ENCODE measurements at regions of chr15 and their contacts with region 1.

Region 1: DNA sequence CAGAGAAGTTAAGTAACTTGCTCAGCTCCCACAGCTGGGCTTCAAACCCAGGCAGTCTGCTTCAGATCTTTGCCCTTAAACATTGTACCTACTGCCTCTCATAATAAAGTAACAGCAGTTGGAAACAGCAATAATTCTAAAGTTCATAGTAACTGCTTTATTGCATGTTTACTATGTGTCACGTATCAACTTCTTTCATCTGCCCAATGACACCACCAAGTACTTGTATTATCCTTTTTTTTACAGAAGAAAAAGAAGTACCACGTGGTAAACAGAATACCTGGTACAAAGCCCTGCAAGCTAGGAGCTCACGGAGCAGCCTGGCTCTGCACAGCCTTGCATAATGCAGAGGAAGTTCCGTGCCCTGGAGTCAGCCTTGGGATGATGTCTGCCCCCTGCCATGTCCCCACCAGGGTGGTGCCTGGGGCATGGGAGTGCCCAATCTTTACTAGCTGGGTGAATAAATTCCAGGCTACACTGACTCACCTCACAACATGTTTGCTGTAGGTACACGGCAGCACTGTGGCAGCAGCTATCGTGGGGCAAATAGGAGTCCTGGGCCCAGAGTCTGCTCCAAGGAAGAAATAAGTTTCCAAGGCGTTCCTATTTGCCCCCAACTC is 77.2 kb downstream of the LDHAL6B start:
- DNase-seq: no peak
- ATAC-seq: no peak
- H3K4me3 ChIP-seq: no peak overlapping the region
- H3K4me3 Mint-ChIP-seq: no peak overlapping the region
- H3K27ac ChIP-seq: no peak overlapping the region
- H3K27ac Mint-ChIP-seq: no peak overlapping the region
- H3K4me1 ChIP-seq: no peaks in the 10 kb centered on the region
- H3K4me1 Mint-ChIP-seq: no peaks in the 10 kb centered on the region
- H3K27me3 ChIP-seq: peaks cover 0 to 5% of the 10 kb centered on the region in 2 experiments
- H3K27me3 Mint-ChIP-seq: peaks cover 2 to 8% of the 10 kb centered on the region in 2 donors

Region 2: DNA sequence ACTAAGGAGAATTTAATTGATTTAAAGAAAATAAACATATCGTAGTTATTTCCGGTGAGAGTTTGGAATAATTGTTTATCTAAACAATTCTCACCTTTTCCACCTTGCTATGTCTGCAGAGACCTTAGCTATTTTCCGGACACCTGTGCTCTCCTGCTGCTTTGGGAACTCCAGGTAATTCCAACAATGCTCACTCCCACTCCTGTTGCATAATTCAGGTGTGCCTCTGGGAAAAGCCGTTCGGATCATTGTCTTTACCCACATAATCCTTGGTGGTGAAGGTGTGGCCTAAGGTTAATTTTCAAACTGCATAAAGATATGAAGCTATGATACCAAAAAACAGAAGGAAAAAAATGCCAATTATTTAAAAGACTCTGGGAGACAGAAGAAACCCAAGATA is 17.8 kb before region 1 on chr15:
- CTCF ChIA-PET with region 1: interaction called in 1 of 2 experiments, 3 read pairs
- POLR2A ChIA-PET with region 1: interaction called in 1 of 2 experiments, 11 read pairs
- DNase-seq: no peak
- ATAC-seq: no peak
- H3K4me3 ChIP-seq: no peak overlapping the region
- H3K4me3 Mint-ChIP-seq: no peak overlapping the region
- H3K27ac ChIP-seq: no peak overlapping the region
- H3K27ac Mint-ChIP-seq: no peak overlapping the region
- H3K4me1 ChIP-seq: no peaks in the 10 kb centered on the region
- H3K4me1 Mint-ChIP-seq: no peaks in the 10 kb centered on the region
- H3K27me3 ChIP-seq: no peaks in the 10 kb centered on the region
- H3K27me3 Mint-ChIP-seq: peaks cover 7 to 9% of the 10 kb centered on the region in 2 donors

Region 3: GRCh38 chr15:59306520-59307164 is 22.8 kb after region 1 on chr15:
- CTCF ChIA-PET with region 1: no interaction called
- POLR2A ChIA-PET with region 1: no interaction called
- DNase-seq: no peak
- ATAC-seq: no peak
- H3K4me3 ChIP-seq: no peak overlapping the region
- H3K4me3 Mint-ChIP-seq: no peak overlapping the region
- H3K27ac ChIP-seq: no peak overlapping the region
- H3K27ac Mint-ChIP-seq: no peak overlapping the region
- H3K4me1 ChIP-seq: no peaks in the 10 kb centered on the region
- H3K4me1 Mint-ChIP-seq: peaks cover 0 to 5% (median 2%) of the 10 kb centered on the region in 3 donors
- H3K27me3 ChIP-seq: peaks cover 0 to 3% of the 10 kb centered on the region in 2 experiments
- H3K27me3 Mint-ChIP-seq: peaks cover 0 to 5% of the 10 kb centered on the region in 2 donors

Measured in T-cell (primary cell).